HEK293T (cell line): ENCODE measurements at regions of chr1 and their contacts with region 1.

Region 1: DNA sequence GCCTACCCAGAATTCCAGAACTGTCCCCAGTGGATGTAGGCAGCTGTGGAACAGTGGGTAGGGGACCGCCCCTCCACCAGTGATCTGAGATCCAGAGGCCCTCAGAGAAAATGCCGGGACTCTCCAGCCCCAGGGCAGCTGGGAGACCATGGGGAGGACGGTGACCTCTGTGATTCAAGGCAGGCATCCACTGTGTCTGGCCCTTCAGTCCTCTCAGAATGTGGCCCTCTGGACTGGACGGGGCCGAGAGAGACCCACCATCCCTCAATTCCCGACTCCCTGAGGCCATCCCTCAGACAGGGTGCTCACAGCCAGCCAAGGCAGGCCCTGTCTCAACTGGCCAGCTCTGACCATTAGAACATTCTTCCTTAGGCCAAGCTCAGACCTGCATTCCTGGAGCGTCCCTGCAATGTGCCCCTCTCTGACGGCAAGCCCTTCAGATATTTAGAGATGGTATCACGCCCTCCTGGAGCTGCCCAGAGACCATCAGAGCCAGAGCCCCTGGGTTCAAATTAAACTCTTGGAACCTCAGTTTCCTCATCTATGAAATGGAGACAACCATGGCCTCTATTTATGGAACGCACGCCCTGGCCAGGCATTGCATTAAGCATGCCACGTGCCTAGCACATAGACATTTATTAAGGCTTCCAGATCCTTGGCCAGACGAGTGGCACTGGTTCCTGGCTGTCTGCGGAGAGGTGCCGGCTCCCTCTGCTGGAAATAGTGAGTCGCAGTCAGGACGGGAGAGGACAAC is 9.6 kb upstream of the EPS8L3 start:
- DNase-seq: peak; percentile 91

Region 2: DNA sequence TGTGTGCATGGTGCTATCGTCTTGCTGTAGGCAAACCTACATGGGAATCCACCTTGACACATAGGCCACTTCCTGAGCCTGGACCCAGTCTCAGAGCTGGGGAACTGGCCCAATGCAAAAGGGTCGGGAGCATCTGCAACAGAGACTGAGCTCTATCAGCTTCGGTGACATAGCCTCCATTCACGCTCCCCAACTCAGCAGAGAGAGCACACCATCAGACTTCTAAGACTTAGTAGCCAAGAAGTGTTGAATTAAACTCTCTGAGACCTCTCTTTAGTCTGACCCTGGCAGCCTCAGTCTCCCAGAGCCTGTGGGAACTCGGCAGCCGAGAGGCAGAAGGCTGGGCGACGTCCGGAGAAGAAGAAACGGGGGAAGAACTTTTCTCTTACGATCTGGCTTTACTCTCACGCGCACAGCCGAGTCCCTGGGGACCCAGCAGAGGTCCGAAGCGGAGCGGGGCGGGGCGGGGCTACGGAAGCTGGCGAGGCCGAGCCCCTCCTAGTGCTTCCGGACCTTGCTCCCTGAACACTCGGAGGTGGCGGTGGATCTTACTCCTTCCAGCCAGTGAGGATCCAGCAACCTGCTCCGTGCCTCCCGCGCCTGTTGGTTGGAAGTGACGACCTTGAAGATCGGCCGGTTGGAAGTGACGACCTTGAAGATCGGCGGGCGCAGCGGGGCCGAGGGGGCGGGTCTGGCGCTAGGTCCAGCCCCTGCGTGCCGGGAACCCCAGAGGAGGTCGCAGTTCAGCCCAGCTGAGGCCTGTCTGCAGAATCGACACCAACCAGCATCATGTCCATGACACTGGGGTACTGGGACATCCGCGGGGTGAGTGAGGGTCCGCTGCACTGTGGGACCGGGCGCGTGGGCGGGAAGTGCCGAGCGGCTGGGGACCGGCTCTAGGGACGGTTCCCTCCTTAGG is 117.5 kb before region 1 on chr1 and contains the start of gene GSTM4:
- CTCF ChIA-PET with region 1: interaction called, 18 read pairs
- POLR2A ChIA-PET with region 1: no interaction called
- DNase-seq: peak; percentile 71

Region 3: GRCh38 chr1:109751531-109752260 is 21.6 kb before region 1 on chr1:
- CTCF ChIA-PET with region 1: no interaction called
- POLR2A ChIA-PET with region 1: no interaction called
- DNase-seq: no peak

Region 4: GRCh38 chr1:109790735-109791494 is 17.6 kb after region 1 on chr1:
- CTCF ChIA-PET with region 1: interaction called, 11 read pairs
- POLR2A ChIA-PET with region 1: no interaction called
- DNase-seq: peak; percentile 69